B cell (primary cell): ENCODE measurements at regions of chr2 and their contacts with region 1.

Region 1: GRCh38 chr2:145644820-145645302 is 1124.9 kb upstream of the ZEB2 start:
- DNase-seq: peak; percentile 38
- ATAC-seq: peak; percentile 47
- H3K4me3 ChIP-seq: peak overlapping the region in 1 of 5 experiments; percentile 18
- H3K4me3 Mint-ChIP-seq: peak overlapping the region; percentile 70
- H3K27ac ChIP-seq: peak overlapping the region in 1 of 2 donors; percentile 23
- H3K27ac Mint-ChIP-seq: peak overlapping the region; percentile 64
- H3K4me1 ChIP-seq: peaks cover 18 to 21% of the 10 kb centered on the region in 2 donors
- H3K4me1 Mint-ChIP-seq: peaks cover 30% of the 10 kb centered on the region
- H3K27me3 ChIP-seq: no peaks in the 10 kb centered on the region
- H3K27me3 Mint-ChIP-seq: no peaks in the 10 kb centered on the region
- CTCF ChIP-seq: no peak

Region 2: GRCh38 chr2:145599756-145600155 is 45.1 kb before region 1 on chr2:
- CTCF ChIA-PET with region 1: no interaction called
- POLR2A ChIA-PET with region 1: no interaction called
- intact Hi-C with region 1: loop called (anchors 5 kb)
- DNase-seq: no peak
- ATAC-seq: no peak
- H3K4me3 ChIP-seq: no peak overlapping the region
- H3K4me3 Mint-ChIP-seq: no peak overlapping the region
- H3K27ac ChIP-seq: no peak overlapping the region
- H3K27ac Mint-ChIP-seq: no peak overlapping the region
- H3K4me1 ChIP-seq: no peaks in the 10 kb centered on the region
- H3K4me1 Mint-ChIP-seq: peaks cover 41% of the 10 kb centered on the region
- H3K27me3 ChIP-seq: no peaks in the 10 kb centered on the region
- H3K27me3 Mint-ChIP-seq: no peaks in the 10 kb centered on the region
- CTCF ChIP-seq: no peak

Region 3: GRCh38 chr2:145692971-145693478 is 48.2 kb after region 1 on chr2:
- CTCF ChIA-PET with region 1: no interaction called
- POLR2A ChIA-PET with region 1: no interaction called
- intact Hi-C with region 1: loop called (anchors 10 kb)
- DNase-seq: peak; percentile 45
- ATAC-seq: peak; percentile 86
- H3K4me3 ChIP-seq: no peak overlapping the region
- H3K4me3 Mint-ChIP-seq: peak overlapping the region; percentile 74
- H3K27ac ChIP-seq: no peak overlapping the region
- H3K27ac Mint-ChIP-seq: peak overlapping the region; percentile 85
- H3K4me1 ChIP-seq: peaks cover 8 to 9% of the 10 kb centered on the region in 2 donors
- H3K4me1 Mint-ChIP-seq: peaks cover 39% of the 10 kb centered on the region
- H3K27me3 ChIP-seq: no peaks in the 10 kb centered on the region
- H3K27me3 Mint-ChIP-seq: no peaks in the 10 kb centered on the region
- CTCF ChIP-seq: no peak